Caco-2 (cell line): ENCODE measurements at regions of chr11 and their contacts with region 1.

Region 1: GRCh38 chr11:88337181-88337986 is at the start of gene CTSC:
- DNase-seq: peak; percentile 97 to 99
- H3K4me3 ChIP-seq: peak within 1 kb of the TSS; percentile 69
- H3K4me3 Mint-ChIP-seq: peak within 1 kb of the TSS; percentile 88
- H3K27ac Mint-ChIP-seq: peak within 1 kb of the TSS; percentile 82
- H3K4me1 ChIP-seq: no peaks in the 10 kb centered on the region; the same call in 1 of the 2 replicates
- H3K4me1 Mint-ChIP-seq: peaks cover 9% of the 10 kb centered on the region
- H3K27me3 ChIP-seq: no peaks in the 10 kb centered on the region
- H3K27me3 Mint-ChIP-seq: no peaks in the 10 kb centered on the region
- CTCF ChIP-seq: no peak
- total RNA-seq, gene CTSC: 250 and 308 TPM in 2 replicates

Region 2: DNA sequence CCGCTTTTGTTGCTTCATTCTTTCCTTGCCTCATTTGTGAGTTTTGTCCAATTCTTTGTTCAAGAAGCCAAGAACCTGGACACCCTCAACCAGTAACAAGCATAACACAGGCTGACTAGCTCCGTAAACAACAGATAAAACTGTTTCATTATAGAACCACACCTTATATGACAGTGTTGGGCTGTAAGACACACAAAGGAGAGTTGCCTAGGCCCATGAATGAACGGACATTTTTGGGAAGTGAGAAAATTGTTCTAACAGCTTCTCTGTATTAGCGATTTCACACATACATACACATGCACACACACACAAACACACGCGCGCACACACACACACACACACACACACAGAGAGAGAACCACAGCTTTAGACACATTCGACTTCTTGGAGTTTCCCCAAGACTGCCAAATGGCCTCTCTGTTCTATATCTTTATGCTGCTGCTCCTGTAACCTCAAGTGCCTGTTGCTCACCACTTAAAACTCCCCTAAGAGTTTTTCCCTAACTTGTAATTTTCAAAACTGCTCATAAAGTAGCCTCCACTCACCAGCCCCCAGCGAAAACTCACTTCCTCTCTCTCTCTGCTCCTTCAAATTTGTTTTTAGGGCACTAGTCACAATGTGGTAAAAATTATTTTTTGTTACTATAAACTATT is 35.8 kb before region 1 on chr11:
- CTCF ChIA-PET with region 1: no interaction called
- POLR2A ChIA-PET with region 1: interaction called, 3 read pairs
- intact Hi-C with region 1: loop called (anchors 1 kb)
- DNase-seq: no peak
- H3K4me3 ChIP-seq: no peak overlapping the region
- H3K4me3 Mint-ChIP-seq: no peak overlapping the region
- H3K27ac Mint-ChIP-seq: peak overlapping the region; percentile 19
- H3K4me1 ChIP-seq: peaks cover 10% of the 10 kb centered on the region
- H3K4me1 Mint-ChIP-seq: peaks cover 30% of the 10 kb centered on the region
- H3K27me3 ChIP-seq: no peaks in the 10 kb centered on the region
- H3K27me3 Mint-ChIP-seq: no peaks in the 10 kb centered on the region
- CTCF ChIP-seq: no peak

Region 3: DNA sequence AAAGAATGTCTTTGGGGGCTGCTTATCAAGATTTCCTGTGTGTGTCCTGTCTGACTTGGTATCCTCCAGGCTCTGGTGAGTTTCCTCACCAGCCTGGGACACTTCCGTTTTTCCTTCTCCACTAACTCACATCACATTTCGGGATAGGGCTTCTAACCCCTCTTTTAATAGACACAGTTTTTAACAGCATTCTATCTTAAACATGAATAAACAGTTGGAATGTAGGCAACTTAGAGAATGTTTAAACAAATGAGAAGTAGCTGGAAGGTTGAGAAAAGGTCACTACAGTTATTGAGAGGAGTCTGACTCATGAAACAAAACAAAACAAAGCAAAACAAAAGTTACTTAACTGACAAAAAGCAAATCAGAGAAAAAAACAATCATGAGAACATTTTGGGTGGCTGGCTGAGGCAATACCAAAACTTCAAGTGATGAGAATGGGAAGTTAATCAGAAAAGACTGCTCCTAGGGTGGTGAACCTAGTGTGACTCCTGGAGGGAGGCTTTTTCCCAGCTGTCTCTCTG is 64.9 kb after region 1 on chr11:
- CTCF ChIA-PET with region 1: no interaction called
- POLR2A ChIA-PET with region 1: interaction called, 3 read pairs
- intact Hi-C with region 1: loop called (anchors 1 kb)
- DNase-seq: peak in 1 of 2 experiments; percentile 48
- H3K4me3 ChIP-seq: no peak overlapping the region
- H3K4me3 Mint-ChIP-seq: peak overlapping the region; percentile 13
- H3K27ac Mint-ChIP-seq: peak overlapping the region; percentile 7
- H3K4me1 ChIP-seq: peaks cover 4% of the 10 kb centered on the region; the same call in 1 of the 2 replicates
- H3K4me1 Mint-ChIP-seq: peaks cover 34% of the 10 kb centered on the region
- H3K27me3 ChIP-seq: no peaks in the 10 kb centered on the region
- H3K27me3 Mint-ChIP-seq: no peaks in the 10 kb centered on the region
- CTCF ChIP-seq: no peak

Region 4: GRCh38 chr11:88484873-88485621 is 147.7 kb after region 1 on chr11:
- CTCF ChIA-PET with region 1: no interaction called
- POLR2A ChIA-PET with region 1: no interaction called
- intact Hi-C with region 1: loop called (anchors 5 kb)
- DNase-seq: peak; percentile 60 to 70
- H3K4me3 ChIP-seq: no peak overlapping the region
- H3K4me3 Mint-ChIP-seq: no peak overlapping the region
- H3K27ac Mint-ChIP-seq: no peak overlapping the region
- H3K4me1 ChIP-seq: no peaks in the 10 kb centered on the region
- H3K4me1 Mint-ChIP-seq: no peaks in the 10 kb centered on the region
- H3K27me3 ChIP-seq: no peaks in the 10 kb centered on the region
- H3K27me3 Mint-ChIP-seq: peaks cover 15% of the 10 kb centered on the region
- CTCF ChIP-seq: peak; percentile 79